ENCODE measurements at regions of chr7 and their contacts with region 1.

Region 1: DNA sequence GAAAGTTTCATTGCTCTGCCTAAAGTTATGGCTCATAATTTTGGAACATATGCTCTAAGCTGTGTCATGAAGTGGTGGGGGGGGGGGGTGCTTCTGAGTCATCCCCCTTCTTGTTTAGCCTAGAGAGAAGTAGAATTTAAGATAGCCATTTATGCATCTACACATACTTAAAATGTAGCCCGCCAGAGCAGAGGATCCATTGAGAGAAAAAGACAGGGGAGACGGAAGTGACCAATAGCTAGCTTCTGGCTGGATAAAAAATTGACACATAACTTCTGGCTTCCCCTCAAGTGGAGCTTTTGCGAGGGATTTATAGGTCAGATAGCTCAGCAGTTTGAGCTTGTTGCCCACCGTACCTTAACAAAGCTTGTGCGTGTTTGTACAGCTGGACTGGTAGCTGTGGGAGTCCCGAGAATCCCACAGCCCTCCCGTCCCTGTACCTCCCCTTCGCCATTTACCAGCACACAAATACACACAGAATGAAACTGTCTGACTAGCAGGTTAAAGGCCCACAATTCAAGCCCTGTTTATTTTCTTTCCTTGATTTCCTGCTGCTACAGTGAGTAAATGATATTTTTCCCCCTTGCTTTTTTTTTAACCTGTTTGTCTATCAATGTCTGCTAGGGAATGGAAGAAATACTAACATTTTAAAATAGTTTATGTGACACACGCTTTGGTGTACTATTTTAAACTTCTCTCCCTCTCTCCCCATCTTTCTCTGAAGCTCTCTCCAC is 232.6 kb upstream of the FERD3L start:
- DNase-seq: peak; percentile 90
- ATAC-seq: peak; percentile 88
- H3K4me3 ChIP-seq: peak overlapping the region; percentile 32; the same call in 1 of the 2 replicates
- H3K27ac ChIP-seq: peak overlapping the region; percentile 88
- H3K4me1 ChIP-seq: peaks cover 6% of the 10 kb centered on the region
- H3K27me3 ChIP-seq: no peaks in the 10 kb centered on the region
- CTCF ChIP-seq: no peak
- POLR2A ChIP-seq: no peak
- RAD21 ChIP-seq: no peak

Region 2: GRCh38 chr7:19262826-19263225 is 115.0 kb before region 1 on chr7:
- CTCF ChIA-PET with region 1: no interaction called
- POLR2A ChIA-PET with region 1: interaction called, 11 read pairs
- dilution Hi-C with region 1: no loop called
- in situ Hi-C with region 1: no loop called
- intact Hi-C with region 1: no loop called
- DNase-seq: no peak
- ATAC-seq: no peak
- H3K4me3 ChIP-seq: no peak overlapping the region
- H3K27ac ChIP-seq: no peak overlapping the region
- H3K4me1 ChIP-seq: no peaks in the 10 kb centered on the region
- H3K27me3 ChIP-seq: no peaks in the 10 kb centered on the region
- CTCF ChIP-seq: no peak
- POLR2A ChIP-seq: no peak
- RAD21 ChIP-seq: no peak

Region 3: GRCh38 chr7:19336836-19337235 is 40.9 kb before region 1 on chr7:
- CTCF ChIA-PET with region 1: no interaction called
- POLR2A ChIA-PET with region 1: no interaction called
- dilution Hi-C with region 1: no loop called
- in situ Hi-C with region 1: no loop called
- intact Hi-C with region 1: no loop called
- DNase-seq: peak; percentile 2
- ATAC-seq: no peak
- H3K4me3 ChIP-seq: no peak overlapping the region
- H3K27ac ChIP-seq: no peak overlapping the region
- H3K4me1 ChIP-seq: no peaks in the 10 kb centered on the region
- H3K27me3 ChIP-seq: no peaks in the 10 kb centered on the region
- CTCF ChIP-seq: no peak
- POLR2A ChIP-seq: no peak
- RAD21 ChIP-seq: no peak

Region 4: DNA sequence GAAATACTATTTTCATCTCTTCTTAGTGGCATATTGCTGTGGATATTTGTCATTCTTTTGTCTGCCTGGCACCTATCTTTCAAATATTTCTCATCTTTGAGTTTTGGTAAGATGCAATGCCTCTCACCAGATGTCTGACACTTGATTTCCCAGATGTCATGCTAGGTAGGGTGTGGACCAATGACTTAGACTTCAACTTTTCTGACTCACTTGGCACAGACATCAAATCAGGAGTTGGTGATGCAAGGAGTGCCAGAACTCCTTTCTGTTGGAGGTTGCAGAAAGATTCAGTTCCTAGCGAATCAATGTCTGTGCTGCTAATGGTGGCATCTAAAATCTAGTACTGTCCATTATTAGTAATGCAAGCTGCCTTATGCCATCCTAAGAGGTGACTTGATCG is 15.7 kb before region 1 on chr7:
- CTCF ChIA-PET with region 1: no interaction called
- POLR2A ChIA-PET with region 1: no interaction called
- dilution Hi-C with region 1: no loop called
- in situ Hi-C with region 1: no loop called
- intact Hi-C with region 1: no loop called
- DNase-seq: peak; percentile 56
- ATAC-seq: no peak
- H3K4me3 ChIP-seq: no peak overlapping the region
- H3K27ac ChIP-seq: no peak overlapping the region
- H3K4me1 ChIP-seq: no peaks in the 10 kb centered on the region
- H3K27me3 ChIP-seq: no peaks in the 10 kb centered on the region
- CTCF ChIP-seq: no peak
- POLR2A ChIP-seq: no peak
- RAD21 ChIP-seq: no peak